ENCODE measurements at regions of chr19 and their contacts with region 1.

Region 1: GRCh38 chr19:11587302-11587974 is 9.8 kb upstream of the ZNF627 start:
- DNase-seq: peak; percentile 81
- H3K4me3 ChIP-seq: no peak overlapping the region
- H3K27ac ChIP-seq: no peak overlapping the region
- H3K4me1 ChIP-seq: peaks cover 0 to 6% (median 3%) of the 10 kb centered on the region in 4 donors
- H3K27me3 ChIP-seq: no peaks in the 10 kb centered on the region
- CTCF ChIP-seq: peak; percentile 86 to 94 (median 90)
- EP300 ChIP-seq: no peak
- POLR2A ChIP-seq: no peak

Region 2: DNA sequence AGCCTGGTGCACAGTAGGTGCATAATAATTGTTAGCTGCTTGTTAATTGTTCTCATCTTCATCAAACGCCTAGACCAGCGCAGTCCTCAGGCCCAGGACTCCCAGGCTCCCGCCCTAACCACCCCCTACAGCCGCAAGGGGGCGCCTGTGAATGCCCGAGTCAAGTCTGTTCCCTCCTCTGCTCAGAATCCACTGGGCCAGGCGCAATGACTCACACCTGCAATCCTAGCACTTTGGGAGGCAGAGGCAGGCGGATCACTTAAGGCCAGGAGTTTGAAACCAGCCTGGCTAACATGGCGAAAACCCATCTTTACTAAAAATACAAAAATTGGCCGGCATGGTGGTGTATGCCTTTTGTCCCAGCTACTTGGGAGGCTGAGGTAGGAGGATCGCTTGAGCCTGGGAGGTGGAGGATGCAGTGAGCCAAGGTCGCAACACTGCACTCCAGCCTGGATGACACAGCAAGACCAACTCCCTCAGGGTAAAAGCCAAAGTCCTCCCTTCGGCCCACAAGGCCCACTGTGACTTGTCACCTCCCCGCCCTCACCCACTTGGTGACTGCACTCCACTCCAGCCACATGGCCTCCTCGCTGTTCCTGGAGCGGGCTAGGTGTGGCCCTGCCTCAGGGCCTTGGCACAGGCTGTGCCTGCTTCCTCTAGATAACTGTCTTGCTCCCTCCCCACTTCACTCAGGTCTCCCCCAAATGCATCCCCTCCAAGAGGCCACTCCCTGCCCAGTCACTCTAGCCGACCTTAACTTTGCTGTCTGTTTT is 90.9 kb before region 1 on chr19:
- in situ Hi-C with region 1: no loop called
- intact Hi-C with region 1: loop called (anchors 2 kb)
- DNase-seq: peak; percentile 76
- H3K4me3 ChIP-seq: no peak overlapping the region
- H3K27ac ChIP-seq: no peak overlapping the region
- H3K4me1 ChIP-seq: no peaks in the 10 kb centered on the region
- H3K27me3 ChIP-seq: no peaks in the 10 kb centered on the region
- CTCF ChIP-seq: peak; percentile 62 to 72 (median 65)
- EP300 ChIP-seq: no peak
- POLR2A ChIP-seq: no peak

Measured in transverse colon (tissue), 4 donors.